H1 (cell line): ENCODE measurements at regions of chr17 and their contacts with region 1.

Region 1: DNA sequence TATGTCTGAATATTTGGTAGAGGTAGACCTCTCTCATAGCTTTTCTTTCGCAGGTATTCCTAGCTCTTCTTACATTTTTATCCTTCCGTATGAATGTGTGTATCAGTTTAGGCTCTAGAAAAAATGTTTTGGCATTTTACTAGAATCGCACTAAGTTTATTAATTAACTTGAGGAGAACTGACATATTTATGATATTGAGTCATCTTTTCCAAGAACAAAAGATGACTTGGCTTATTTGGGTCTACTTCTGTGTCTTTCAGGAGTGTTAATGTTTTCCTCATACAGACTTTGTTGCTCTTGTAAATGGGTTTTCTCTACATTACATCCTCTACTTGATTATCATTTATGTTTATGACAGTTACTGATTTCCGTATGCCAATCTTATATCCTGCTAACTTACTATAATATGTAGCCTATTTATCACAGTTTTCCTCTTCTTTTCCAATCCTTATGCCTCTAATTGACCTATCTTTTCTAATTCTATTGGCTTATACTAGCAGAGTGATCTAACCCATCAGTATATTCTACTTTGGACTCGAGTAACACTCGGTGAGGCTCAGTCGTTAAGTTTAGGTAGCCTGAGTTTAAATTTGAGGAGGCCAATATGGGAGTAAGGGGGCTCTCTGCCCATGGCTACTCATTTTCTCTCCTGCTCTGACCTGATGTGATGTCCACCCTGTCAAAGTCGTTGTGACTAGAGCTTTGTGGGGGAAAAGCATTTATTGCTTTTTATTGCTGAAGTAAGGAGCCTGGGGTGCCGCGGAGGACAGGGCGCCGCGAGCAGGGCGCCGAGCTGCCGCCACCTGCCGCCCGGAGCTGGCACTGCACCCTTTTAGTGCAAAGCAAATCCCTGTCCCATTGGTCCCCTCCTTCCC is 20.0 kb downstream of the ST6GALNAC1 start:
- DNase-seq: peak in 1 of 2 experiments; percentile 93
- H3K4me3 ChIP-seq: no peak overlapping the region
- H3K27ac ChIP-seq: no peak overlapping the region
- H3K4me1 ChIP-seq: no peaks in the 10 kb centered on the region
- H3K27me3 ChIP-seq: no peaks in the 10 kb centered on the region; a peak in 2 of 7 replicates
- CTCF ChIP-seq: peak; percentile 81 to 94 (median 85)
- EP300 ChIP-seq: no peak
- POLR2A ChIP-seq: no peak
- RAD21 ChIP-seq: peak; percentile 83 to 85

Region 2: DNA sequence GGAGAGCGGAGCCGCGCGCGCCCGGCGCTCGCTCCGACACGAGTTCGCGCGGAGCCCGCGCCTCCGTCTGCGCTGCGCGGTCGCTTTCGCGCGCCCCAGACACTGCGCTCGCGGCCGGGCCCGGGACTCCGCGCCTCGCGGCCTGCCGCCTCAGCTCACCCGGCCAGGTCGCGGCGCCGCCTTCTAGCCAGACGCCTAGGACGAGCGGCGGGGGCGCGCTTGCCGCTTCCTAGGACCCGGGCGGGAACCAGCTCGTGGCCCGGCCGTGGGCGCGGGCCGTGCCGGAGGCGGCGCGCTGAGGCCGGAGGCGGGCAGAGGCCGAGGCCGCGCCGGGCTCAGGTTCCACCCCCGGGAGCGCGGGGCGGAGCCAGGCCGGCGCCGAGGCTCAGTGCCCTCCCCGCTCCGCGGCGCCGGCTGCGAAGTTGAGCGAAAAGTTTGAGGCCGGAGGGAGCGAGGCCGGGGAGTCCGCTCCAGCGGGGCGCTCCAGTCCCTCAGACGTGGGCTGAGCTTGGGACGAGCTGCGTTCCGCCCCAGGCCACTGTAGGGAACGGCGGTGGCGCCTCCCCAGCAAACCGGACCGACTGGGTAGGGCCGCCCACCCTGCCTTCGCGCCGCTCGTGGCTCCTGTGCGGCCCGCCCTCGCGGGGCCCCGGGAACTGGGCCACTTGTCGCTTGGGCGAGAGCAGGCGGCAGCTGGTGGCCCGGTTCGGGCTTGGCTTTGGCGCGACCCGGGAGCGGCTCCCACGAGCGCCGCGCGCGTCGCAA is 239.1 kb before region 1 on chr17 and contains the start of gene SPHK1:
- CTCF ChIA-PET with region 1: no interaction called
- POLR2A ChIA-PET with region 1: no interaction called
- DNase-seq: peak in 1 of 2 experiments; percentile 83
- H3K4me3 ChIP-seq: peak within 1 kb of the TSS; percentile 39 to 80 (median 60)
- H3K27ac ChIP-seq: no peak within 1 kb of the TSS
- H3K4me1 ChIP-seq: peaks cover 5 to 46% (median 22%) of the 10 kb centered on the region in 4 experiments
- H3K27me3 ChIP-seq: peaks cover 18 to 47% (median 33%) of the 10 kb centered on the region in 4 experiments; a peak in 6 of 7 replicates
- CTCF ChIP-seq: no peak
- EP300 ChIP-seq: no peak
- POLR2A ChIP-seq: no peak
- RAD21 ChIP-seq: no peak
- total RNA-seq, gene SPHK1: 2.4 and 2.6 TPM in 2 replicates

Region 3: DNA sequence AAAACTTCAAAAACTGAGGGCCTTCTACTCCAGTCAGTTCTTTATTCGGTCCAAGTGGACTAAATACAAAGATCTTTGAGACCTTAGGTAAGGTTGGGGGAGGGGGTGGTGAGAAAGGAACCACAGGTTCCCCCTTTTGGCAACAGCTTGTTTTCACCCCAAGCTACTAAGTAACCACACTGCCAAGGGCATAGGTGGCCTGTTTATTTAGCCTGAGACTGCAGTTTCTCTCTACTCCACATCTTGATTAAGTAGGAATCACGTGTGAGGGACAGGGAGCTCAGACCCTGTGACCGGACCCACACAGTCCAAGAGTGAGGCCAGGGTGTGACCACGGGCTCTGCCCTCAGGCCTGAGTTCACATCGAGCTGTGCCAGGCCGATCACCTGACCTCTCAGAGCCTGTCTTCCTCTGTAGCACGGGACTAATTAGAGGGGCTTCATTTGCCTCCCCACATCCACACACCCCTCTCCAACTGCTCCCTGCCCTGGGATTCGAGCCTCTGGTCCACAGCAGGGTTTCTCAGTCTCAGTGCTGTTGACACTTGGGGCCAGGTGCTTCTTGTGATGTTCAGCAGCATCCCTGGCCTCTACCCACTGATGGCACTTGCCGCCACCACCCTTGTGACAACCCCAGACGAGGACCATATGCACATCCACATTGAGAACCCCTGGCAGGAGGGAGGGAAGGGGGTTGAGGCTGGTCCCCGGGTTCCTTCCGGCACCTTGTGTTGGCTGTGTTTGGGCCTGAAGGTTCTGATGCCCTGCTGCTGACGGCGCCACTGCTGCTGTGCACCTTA is 55.7 kb before region 1 on chr17:
- CTCF ChIA-PET with region 1: interaction called, 33 read pairs
- POLR2A ChIA-PET with region 1: interaction called, 4 read pairs
- DNase-seq: no peak
- H3K4me3 ChIP-seq: no peak overlapping the region
- H3K27ac ChIP-seq: no peak overlapping the region
- H3K4me1 ChIP-seq: peaks cover 0 to 21% (median 5%) of the 10 kb centered on the region in 4 experiments; a peak in 6 of 7 replicates
- H3K27me3 ChIP-seq: no peaks in the 10 kb centered on the region; a peak in 2 of 7 replicates
- CTCF ChIP-seq: no peak
- EP300 ChIP-seq: no peak
- POLR2A ChIP-seq: peak in 1 of 2 experiments; percentile 49; a peak in 1 of 3 replicates
- RAD21 ChIP-seq: no peak

Region 4: GRCh38 chr17:76585818-76586593 is 37.5 kb before region 1 on chr17 and contains the start of gene ST6GALNAC2:
- CTCF ChIA-PET with region 1: interaction called, 12 read pairs
- POLR2A ChIA-PET with region 1: interaction called, 5 read pairs
- DNase-seq: peak in 1 of 2 experiments; percentile 67
- H3K4me3 ChIP-seq: peak within 1 kb of the TSS; percentile 42 to 81 (median 48)
- H3K27ac ChIP-seq: no peak within 1 kb of the TSS
- H3K4me1 ChIP-seq: peaks cover 0 to 22% (median 10%) of the 10 kb centered on the region in 4 experiments; a peak in 6 of 7 replicates
- H3K27me3 ChIP-seq: peaks cover 33 to 64% (median 51%) of the 10 kb centered on the region in 4 experiments
- CTCF ChIP-seq: no peak
- EP300 ChIP-seq: no peak
- POLR2A ChIP-seq: no peak
- RAD21 ChIP-seq: no peak; a peak in 1 of 4 replicates
- total RNA-seq, gene ST6GALNAC2: not detected in 2 replicates

Region 5: DNA sequence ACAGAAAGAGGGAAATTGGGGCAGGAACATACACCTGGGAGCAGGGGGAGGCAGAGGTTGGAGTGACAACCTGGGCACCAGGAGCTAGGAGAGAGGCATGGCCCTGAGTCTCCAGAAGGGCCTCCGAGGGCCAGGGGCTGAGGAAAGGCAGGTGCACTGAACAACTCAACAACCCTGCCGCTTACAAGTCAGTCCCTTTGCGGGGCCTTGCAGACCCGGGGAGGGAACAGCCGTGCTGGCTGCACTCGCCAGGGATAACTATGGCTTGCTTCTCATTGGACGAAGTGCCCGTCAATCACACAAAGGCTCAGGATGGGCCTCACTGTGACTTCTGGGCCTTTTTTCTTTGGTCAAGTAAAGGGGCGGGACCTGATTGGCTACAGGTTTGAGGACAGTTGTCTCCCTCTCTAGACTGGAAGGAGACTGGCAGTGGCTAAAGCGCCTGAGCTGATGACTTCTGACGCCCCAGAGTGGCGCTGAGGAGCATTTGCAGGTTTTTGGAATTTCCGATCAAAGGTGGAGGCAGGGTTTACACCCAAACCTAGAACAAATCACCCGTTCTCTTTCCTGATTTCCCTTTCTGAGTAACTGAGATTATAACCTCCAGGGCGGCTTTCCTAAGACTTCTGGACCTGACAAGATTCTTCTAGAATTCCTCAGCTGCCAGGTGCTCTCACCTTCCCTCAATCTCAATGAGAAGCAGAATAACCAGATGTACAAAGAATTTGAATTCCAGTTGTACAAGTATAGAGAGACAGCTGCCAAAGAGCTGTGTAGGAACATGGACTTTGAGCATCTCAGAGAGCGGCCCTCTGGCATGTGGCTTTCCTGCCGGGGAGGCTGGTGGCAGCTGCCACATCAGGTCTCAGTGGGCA is 10.3 kb before region 1 on chr17:
- CTCF ChIA-PET with region 1: interaction called, 35 read pairs
- POLR2A ChIA-PET with region 1: no interaction called
- DNase-seq: peak; percentile 51 to 80
- H3K4me3 ChIP-seq: no peak overlapping the region
- H3K27ac ChIP-seq: no peak overlapping the region
- H3K4me1 ChIP-seq: peaks cover 0 to 4% (median 1%) of the 10 kb centered on the region in 4 experiments; a peak in 3 of 7 replicates
- H3K27me3 ChIP-seq: no peaks in the 10 kb centered on the region
- CTCF ChIP-seq: peak; percentile 48 to 84 (median 57)
- EP300 ChIP-seq: no peak
- POLR2A ChIP-seq: no peak
- RAD21 ChIP-seq: peak; percentile 55 to 68